ENCODE measurements at regions of chr1 and their contacts with region 1.

Region 1: DNA sequence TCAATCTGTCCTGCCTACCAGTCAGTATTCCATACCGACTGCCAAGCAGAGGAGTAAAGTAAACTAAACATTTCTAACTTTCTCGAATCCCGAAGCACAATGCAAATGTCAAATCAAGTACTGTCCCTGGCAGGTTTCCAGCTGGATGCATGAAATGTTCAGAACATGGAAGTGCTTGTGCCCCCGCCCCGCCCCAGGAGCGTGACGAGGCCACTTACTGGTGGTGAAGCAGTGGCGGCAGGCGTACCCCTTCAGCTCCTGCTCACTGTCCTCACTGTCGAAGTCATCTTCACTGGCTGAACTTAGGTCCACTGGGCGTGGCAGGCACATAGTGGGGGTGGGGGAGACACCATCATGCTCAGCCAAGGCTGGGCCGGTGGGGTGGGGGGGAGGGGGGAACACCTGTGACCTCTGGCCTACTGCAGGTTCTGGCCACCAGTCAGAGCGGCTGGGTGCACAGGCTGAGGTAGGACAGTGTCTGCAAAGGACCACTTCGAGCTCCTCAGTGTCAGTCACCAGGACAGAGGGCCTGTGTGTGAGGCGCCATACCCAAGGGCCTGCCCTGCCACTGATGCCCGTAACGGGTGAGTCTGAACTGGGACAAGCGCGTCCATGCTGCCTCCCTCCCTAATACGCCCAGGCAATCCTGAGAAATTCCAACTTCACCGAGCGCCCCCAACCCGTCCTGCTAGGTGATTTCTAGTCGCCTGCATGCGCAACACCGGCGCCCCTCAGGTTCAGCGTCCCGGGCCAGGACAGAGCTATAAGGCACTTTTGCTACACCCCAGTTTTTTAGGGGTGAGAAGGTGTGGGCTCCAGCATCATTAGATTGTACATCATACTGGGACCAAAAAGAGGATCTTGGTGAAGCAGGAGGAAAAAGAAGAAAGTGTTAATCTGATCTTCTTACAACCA is 46.9 kb downstream of the SLC45A1 start:
- DNase-seq: peak in 1 of 2 donors; percentile 54
- ATAC-seq: peak; percentile 4 to 74 (median 39)
- H3K4me3 ChIP-seq: no peak overlapping the region
- H3K27ac ChIP-seq: peak overlapping the region; percentile 38 to 93 (median 64)
- H3K4me1 ChIP-seq: peaks cover 15 to 78% (median 62%) of the 10 kb centered on the region in 9 donors
- H3K27me3 ChIP-seq: no peaks in the 10 kb centered on the region
- CTCF ChIP-seq: no peak

Region 2: DNA sequence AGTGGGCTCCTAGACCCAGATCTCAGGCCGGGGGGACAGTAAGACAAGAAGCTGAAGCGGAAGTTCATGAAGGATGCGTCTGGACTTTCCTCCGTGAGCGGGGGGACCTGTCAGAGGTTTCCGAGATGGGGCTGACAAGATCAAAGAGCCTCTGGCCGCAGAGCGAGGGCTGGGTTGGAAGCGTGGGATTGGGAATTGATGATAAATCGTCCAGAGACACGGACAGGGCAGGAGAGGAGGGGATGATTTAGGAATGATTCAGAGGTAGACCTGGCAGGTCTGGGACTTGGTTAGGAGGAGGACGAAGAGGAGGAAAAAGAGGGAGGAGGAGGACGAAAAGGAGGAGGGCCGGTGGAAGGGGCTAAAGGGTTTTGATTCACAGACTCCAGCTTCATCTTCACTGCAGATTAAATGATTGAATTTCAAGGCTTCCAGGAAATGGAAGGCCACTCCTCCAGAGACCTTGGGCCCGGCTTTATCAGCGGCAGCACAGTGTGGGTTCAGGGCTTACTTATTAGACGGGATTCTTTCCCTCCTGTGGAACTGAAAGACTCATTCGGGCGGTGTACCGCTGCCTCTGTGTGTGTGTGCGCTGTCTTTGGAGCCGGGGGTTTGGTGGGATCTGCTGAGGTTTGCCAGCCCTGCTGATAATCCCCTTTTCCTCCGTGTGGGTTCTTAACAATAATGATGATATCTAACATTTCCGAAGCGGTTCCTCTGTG is 132.6 kb before region 1 on chr1:
- intact Hi-C with region 1: no loop called
- DNase-seq: no peak
- ATAC-seq: no peak
- H3K4me3 ChIP-seq: no peak overlapping the region
- H3K27ac ChIP-seq: no peak overlapping the region
- H3K4me1 ChIP-seq: no peaks in the 10 kb centered on the region
- H3K27me3 ChIP-seq: peaks cover 0 to 21% (median 12%) of the 10 kb centered on the region in 7 donors
- CTCF ChIP-seq: no peak

Region 3: DNA sequence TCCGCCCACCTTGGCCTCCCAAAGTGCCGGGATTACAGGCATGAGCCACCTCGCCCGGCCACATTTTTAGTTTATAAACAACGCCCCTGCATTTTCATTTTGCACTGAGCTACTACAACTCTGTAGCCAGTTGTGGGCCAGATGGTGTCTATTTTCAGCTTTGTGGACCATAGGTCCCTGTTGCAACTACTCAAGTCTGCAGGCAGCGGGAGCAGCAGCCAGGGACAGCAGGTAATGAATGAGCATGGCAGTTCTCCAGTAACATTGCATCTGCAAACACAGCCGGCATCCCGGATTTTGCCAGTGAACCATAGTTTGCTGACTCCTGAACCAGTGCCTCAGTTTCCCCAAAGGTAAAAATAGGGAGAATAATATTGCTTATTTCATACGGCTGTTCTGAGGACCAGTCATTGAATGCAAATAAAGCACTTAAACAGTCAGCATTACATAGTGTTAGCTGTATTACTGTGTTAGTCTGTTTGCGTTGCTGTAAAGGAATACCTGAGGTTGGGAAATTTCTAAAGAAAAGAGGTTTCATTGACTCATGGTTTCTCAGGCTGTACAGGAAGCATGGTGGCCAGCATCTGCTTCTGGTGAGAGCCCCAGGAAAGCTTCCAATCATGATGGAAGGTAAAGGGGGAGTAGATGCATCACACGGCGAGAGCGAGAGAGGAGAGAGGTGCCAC is 112.4 kb before region 1 on chr1:
- intact Hi-C with region 1: no loop called
- DNase-seq: no peak
- ATAC-seq: no peak
- H3K4me3 ChIP-seq: no peak overlapping the region
- H3K27ac ChIP-seq: no peak overlapping the region
- H3K4me1 ChIP-seq: no peaks in the 10 kb centered on the region
- H3K27me3 ChIP-seq: no peaks in the 10 kb centered on the region
- CTCF ChIP-seq: no peak

Region 4: GRCh38 chr1:8402109-8402704 is 37.4 kb after region 1 on chr1:
- intact Hi-C with region 1: loop called in 1 of 10 experiments (anchors 5 kb)
- DNase-seq: no peak
- ATAC-seq: peak in 3 of 8 donors; percentile 26 to 51 (median 35)
- H3K4me3 ChIP-seq: no peak overlapping the region
- H3K27ac ChIP-seq: peak overlapping the region in 4 of 10 donors; percentile 2 to 42 (median 21)
- H3K4me1 ChIP-seq: peaks cover 15 to 59% (median 44%) of the 10 kb centered on the region in 9 donors
- H3K27me3 ChIP-seq: no peaks in the 10 kb centered on the region
- CTCF ChIP-seq: no peak

Region 5: DNA sequence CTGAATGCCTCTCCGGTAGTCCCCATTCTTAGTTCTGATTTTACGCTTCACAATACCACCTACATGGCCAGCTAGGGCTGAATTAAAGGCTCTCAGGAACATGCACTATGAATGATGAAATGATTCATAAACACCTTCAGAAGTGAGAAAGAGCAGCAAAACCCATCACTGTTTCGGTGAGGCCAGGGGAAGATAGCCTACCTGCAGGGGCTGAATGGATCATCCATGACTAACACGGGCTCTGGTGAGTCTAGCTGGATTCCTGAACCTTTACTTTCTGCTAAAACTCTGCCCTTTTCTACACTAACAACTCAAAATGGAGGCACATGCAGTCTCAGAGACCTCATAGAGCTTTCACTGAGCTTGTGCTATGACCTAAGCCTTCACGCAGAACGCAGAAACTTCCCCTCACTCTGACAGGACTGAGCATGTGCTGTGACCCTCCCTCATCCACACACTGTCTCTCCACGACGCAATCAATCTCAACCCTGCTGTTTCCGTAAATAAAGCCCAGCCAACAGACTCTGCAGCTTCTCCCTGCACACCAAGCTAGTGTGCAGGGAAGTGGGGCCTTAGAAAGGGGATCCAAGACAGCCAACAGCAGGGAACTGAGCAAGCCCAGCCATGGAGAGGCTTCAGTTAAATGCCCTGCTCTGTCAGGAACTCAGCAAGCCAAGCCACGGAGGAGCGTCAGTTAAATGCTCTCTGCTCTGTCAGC is 160.9 kb after region 1 on chr1:
- intact Hi-C with region 1: loop called in 2 of 10 experiments (anchors 10 kb)
- DNase-seq: peak; percentile 50 to 92
- ATAC-seq: peak; percentile 98 to 99 (median 99)
- H3K4me3 ChIP-seq: peak overlapping the region; percentile 0 to 64 (median 60)
- H3K27ac ChIP-seq: peak overlapping the region; percentile 46 to 93 (median 86)
- H3K4me1 ChIP-seq: peaks cover 10 to 57% (median 48%) of the 10 kb centered on the region in 9 donors
- H3K27me3 ChIP-seq: no peaks in the 10 kb centered on the region
- CTCF ChIP-seq: no peak

Region 6: DNA sequence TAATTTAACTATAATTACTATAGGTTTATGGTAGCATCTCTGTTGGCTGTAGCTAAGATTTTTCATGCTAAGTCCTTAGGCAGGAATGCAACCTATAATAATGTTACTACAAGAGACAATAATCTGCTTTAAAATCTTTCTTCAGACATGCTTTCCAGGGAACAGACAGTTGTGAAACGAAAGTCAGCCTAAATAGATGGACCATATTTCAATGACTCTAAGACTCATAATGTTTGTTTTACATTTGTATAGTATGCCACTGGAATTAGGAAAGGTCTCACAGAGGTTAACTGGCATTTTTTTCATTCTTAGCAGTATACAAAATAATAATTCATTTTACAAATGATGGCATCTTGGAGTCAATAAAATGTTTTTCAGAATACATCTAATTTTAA is 444.6 kb after region 1 on chr1:
- intact Hi-C with region 1: no loop called
- DNase-seq: no peak
- ATAC-seq: no peak
- H3K4me3 ChIP-seq: no peak overlapping the region
- H3K27ac ChIP-seq: no peak overlapping the region
- H3K4me1 ChIP-seq: peaks cover 0 to 33% (median 11%) of the 10 kb centered on the region in 9 donors
- H3K27me3 ChIP-seq: no peaks in the 10 kb centered on the region
- CTCF ChIP-seq: no peak

Measured in heart right ventricle (tissue), 16 donors.